HEK293 (cell line): ENCODE measurements at regions of chr3 and their contacts with region 1.

Region 1: GRCh38 chr3:119498186-119498987 is at the start of gene TIMMDC1:
- H3K4me3 ChIP-seq: peak within 1 kb of the TSS; percentile 95
- H3K27ac ChIP-seq: peak within 1 kb of the TSS; percentile 85
- H3K4me1 ChIP-seq: no peaks in the 10 kb centered on the region
- CTCF ChIP-seq: no peak

Region 2: GRCh38 chr3:119463171-119464169 is 34.9 kb before region 1 on chr3 and contains the start of gene TMEM39A:
- CTCF ChIA-PET with region 1: no interaction called
- POLR2A ChIA-PET with region 1: interaction called, 39 read pairs
- H3K4me3 ChIP-seq: peak within 1 kb of the TSS; percentile 70
- H3K27ac ChIP-seq: peak within 1 kb of the TSS; percentile 11; the same call in 1 of the 2 replicates
- H3K4me1 ChIP-seq: no peaks in the 10 kb centered on the region
- CTCF ChIP-seq: peak; percentile 44; the same call in 1 of the 2 replicates

Region 3: DNA sequence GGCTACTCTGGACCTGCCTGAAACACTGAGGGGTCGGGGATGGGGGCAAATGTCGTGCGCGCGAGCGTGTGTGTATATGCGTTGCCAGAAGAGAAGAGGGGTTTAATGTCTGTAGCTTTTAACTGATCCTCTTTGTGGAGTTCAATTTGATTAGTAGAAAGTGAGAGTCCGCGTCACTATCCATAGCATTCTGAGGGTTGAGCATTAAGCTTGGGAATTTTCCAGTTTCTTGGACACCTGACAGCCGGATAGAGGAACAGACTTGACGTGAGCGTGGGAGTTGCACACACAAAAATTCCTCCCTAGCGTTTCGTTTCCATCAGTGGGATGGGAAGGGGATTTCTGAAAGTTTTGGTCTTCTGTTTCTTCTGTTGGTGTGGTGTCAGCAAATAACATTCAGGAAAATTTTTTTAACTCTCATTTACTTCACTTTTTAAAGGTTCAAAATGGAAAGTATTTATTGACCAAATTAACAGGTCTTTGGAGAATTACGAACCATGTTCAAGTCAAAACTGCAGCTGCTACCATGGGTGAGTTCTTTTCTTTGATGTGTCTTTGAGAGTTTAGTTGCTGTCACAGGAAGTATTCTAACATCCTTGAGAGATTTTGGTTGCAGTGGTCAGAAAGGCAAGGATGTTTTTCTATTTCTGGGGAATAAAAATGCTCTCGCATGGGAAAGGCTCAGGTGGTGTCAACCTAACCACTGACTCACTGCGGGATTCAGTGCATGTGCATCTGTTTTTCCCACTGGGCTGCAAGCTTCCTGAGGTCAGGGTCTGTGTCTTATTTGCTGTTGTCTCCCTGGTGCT is 28.8 kb before region 1 on chr3:
- CTCF ChIA-PET with region 1: no interaction called
- POLR2A ChIA-PET with region 1: interaction called, 39 read pairs
- H3K4me3 ChIP-seq: peak overlapping the region; percentile 67
- H3K27ac ChIP-seq: peak overlapping the region; percentile 62; the same call in 1 of the 2 replicates
- H3K4me1 ChIP-seq: no peaks in the 10 kb centered on the region
- CTCF ChIP-seq: no peak

Region 4: GRCh38 chr3:119510690-119511089 is 12.3 kb after region 1 on chr3:
- CTCF ChIA-PET with region 1: no interaction called
- POLR2A ChIA-PET with region 1: no interaction called
- H3K4me3 ChIP-seq: no peak overlapping the region
- H3K27ac ChIP-seq: no peak overlapping the region
- H3K4me1 ChIP-seq: no peaks in the 10 kb centered on the region
- CTCF ChIP-seq: no peak

Region 5: DNA sequence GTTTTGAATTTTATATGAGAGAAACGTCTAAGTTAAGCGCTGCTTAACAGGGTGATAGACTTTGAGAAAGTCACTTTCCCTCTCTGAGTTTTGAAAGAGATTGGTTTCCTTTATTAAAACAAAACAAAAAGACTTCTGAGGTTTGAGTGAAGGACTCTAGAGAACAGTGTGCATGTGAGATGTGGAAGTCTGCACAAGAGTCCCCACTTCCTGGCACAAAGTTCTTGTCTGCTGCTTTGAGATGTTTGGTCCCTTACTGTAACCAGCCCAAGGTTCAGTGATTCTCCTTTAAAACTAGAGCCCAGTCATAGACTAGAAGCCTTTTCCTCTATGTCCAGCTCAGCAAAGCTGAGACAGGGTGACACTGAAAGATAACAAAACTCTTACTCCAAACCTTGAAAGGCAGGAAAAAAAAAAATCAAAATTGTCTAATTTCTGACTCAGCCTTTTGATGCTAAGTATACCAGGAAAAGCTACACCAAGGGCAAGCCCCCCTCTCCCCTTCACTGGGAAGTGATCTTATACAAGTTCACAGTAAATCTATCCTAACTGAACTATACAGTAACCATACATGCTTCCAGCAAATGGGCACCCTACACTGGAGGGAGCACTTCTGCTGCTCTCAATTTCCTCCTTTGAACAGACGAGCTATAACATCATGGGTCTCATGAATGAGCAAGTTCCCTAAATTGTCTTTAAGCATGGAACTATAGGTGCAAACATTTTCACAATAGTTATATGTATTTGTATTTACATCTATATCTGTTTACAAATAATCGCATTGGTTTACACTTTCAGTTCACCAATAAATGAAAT is 159.7 kb after region 1 on chr3:
- CTCF ChIA-PET with region 1: no interaction called
- POLR2A ChIA-PET with region 1: no interaction called
- H3K4me3 ChIP-seq: no peak overlapping the region
- H3K27ac ChIP-seq: no peak overlapping the region
- H3K4me1 ChIP-seq: no peaks in the 10 kb centered on the region
- CTCF ChIP-seq: no peak